Thyroid gland (tissue), 4 donors: ENCODE measurements at regions of chr12 and their contacts with region 1.

Region 1: GRCh38 chr12:104671407-104672098 is 214.8 kb downstream of the CHST11 start:
- DNase-seq: peak; percentile 96 to 97
- H3K4me3 ChIP-seq: no peak overlapping the region
- H3K27ac ChIP-seq: peak overlapping the region; percentile 87 to 96 (median 90)
- H3K4me1 ChIP-seq: peaks cover 41 to 52% of the 10 kb centered on the region in 2 donors
- H3K27me3 ChIP-seq: no peaks in the 10 kb centered on the region
- CTCF ChIP-seq: no peak
- POLR2A ChIP-seq: no peak

Region 2: GRCh38 chr12:104582739-104583138 is 88.8 kb before region 1 on chr12:
- intact Hi-C with region 1: no loop called
- DNase-seq: no peak
- H3K4me3 ChIP-seq: no peak overlapping the region
- H3K27ac ChIP-seq: no peak overlapping the region
- H3K4me1 ChIP-seq: peaks cover 0 to 4% of the 10 kb centered on the region in 2 donors
- H3K27me3 ChIP-seq: no peaks in the 10 kb centered on the region
- CTCF ChIP-seq: no peak
- POLR2A ChIP-seq: no peak

Region 3: GRCh38 chr12:104720339-104721038 is 48.9 kb after region 1 on chr12:
- intact Hi-C with region 1: loop called (anchors 10 kb)
- DNase-seq: no peak
- H3K4me3 ChIP-seq: no peak overlapping the region
- H3K27ac ChIP-seq: peak overlapping the region in 2 of 3 donors; percentile 4 to 23
- H3K4me1 ChIP-seq: peaks cover 18 to 35% of the 10 kb centered on the region in 2 donors
- H3K27me3 ChIP-seq: no peaks in the 10 kb centered on the region
- CTCF ChIP-seq: no peak
- POLR2A ChIP-seq: no peak